ENCODE measurements at regions of chr9 and their contacts with region 1.

Region 1: GRCh38 chr9:19048966-19049916 is at the start of gene RRAGA:
- DNase-seq: peak; percentile 94
- H3K4me3 Mint-ChIP-seq: peak within 1 kb of the TSS; percentile 85
- H3K27ac Mint-ChIP-seq: peak within 1 kb of the TSS; percentile 90
- H3K4me1 Mint-ChIP-seq: peaks cover 25% of the 10 kb centered on the region
- H3K27me3 Mint-ChIP-seq: no peaks in the 10 kb centered on the region
- total RNA-seq, gene RRAGA: 21.6 to 22.3 TPM

Region 2: DNA sequence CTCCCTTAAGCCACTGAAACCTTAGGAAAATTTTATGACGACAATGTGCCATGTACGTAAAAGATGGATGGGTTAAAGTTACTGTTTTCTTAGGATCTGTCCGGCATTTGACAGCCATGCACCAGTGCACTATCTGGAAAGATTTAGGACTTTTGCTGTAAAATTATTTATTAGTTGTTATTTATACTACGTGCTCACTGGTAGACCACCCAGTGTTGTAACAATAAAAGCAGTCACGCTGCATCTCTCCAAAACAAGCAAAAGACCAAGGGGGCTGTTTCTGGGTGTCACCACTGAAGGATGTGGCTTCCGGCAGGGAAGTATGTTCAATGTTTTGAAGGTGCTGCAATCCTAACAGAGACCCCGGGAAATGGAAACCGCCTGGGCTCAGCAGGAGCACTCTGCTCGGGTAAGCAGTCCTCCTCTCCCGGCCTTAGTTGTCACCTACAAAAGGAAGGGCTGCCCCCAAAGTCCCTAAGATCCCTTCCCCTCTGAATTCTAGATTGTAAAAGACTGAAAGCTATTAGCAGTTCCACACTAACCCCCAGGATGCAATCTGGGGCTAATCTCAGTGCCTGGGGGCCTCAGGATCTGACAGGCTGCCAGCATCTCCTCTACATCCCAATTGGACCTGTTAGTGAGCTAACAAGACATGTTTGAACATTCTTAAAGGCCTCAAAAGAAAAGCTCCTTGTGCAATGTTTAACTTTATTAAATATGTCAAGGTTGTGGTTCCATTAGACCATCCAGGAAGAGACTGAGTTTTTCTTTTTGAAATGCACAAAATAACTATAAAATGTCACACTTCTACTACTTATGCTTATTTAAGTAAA is 54.8 kb before region 1 on chr9:
- CTCF ChIA-PET with region 1: no interaction called
- intact Hi-C with region 1: no loop called
- DNase-seq: no peak
- H3K4me3 Mint-ChIP-seq: no peak overlapping the region
- H3K27ac Mint-ChIP-seq: no peak overlapping the region
- H3K4me1 Mint-ChIP-seq: no peaks in the 10 kb centered on the region
- H3K27me3 Mint-ChIP-seq: no peaks in the 10 kb centered on the region

Region 3: GRCh38 chr9:19102631-19103345 is 53.5 kb after region 1 on chr9 and contains the start of gene HAUS6:
- CTCF ChIA-PET with region 1: no interaction called
- intact Hi-C with region 1: loop called (anchors 1 kb)
- DNase-seq: peak; percentile 97
- H3K4me3 Mint-ChIP-seq: peak within 1 kb of the TSS; percentile 94
- H3K27ac Mint-ChIP-seq: peak within 1 kb of the TSS; percentile 93
- H3K4me1 Mint-ChIP-seq: peaks cover 22% of the 10 kb centered on the region
- H3K27me3 Mint-ChIP-seq: no peaks in the 10 kb centered on the region
- total RNA-seq, gene HAUS6: 23.6 to 24.1 TPM

Region 4: DNA sequence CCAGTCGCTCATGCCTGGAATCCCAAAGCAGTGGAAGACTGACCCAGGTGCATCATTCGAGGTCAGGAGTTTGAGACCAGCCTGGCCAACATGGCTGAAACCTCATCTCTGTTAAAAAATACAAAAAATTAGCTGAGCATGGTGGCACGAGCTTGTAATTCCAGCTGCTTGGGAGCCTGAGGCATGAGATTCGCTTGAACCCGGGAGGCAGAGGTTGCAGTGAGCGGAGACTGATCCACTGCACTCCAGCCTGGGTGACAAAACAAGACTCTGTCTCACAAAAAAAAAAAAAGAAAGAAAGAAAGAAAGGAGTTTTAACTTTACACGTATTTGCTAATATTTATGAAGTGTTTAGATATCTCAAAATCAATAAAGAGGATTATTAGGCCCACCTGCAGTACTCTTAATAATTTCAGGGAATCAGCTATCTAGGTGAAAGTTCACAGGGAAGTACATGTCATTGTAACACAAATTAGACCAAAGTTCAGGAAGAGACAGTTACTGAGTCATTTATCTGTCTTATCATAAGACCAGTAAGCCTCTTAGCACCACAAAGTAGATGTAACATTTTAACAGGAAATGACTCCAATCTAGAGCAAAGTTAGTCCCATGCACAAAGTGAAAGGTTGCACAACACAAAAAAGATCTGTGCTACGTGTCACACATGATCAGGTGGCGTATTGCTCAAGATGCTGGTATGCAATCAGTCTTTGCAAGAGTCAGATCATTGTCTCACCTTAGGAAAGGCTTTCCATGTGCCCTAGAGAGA is 112.2 kb after region 1 on chr9:
- CTCF ChIA-PET with region 1: interaction called, 7 read pairs
- intact Hi-C with region 1: loop called (anchors 1 kb)
- DNase-seq: peak; percentile 87
- H3K4me3 Mint-ChIP-seq: no peak overlapping the region
- H3K27ac Mint-ChIP-seq: peak overlapping the region; percentile 81
- H3K4me1 Mint-ChIP-seq: peaks cover 23% of the 10 kb centered on the region
- H3K27me3 Mint-ChIP-seq: no peaks in the 10 kb centered on the region

Region 5: DNA sequence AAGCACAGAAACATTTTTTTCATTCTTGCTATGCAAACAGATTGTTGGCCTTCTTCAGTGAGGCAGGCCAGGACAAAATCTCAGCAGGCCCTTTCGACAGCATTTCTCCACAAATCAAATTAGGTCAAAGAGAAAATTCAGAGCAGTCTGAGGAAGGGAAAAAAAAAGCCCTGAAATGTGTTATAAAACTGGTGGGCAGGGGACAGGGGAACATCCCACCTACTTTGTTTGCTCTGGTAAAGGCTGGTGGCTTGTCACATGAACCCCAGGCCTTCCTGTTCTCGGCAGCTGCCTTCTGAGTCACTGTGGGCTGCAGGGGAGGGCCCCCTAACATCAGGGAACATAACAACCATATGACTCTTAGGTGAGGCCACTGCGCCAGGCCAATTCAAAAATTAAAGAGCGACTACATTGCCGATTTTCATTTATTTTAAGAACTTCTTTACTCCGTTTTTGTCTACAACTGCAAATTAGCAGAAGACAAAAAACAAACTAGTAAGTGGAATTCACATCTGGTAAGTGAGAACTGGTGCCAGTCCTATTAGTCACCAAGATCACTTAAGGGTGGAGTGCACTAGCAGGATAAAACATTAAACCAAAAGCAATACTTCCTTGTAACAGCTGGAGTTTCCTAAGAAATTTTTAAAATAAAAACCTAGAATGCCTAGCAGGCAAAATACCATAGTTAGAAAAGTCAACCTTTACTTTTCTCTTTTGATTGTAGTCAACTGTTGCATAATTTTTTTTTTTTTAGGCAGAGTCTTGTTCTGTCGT is 135.1 kb after region 1 on chr9:
- CTCF ChIA-PET with region 1: interaction called, 4 read pairs
- intact Hi-C with region 1: loop called (anchors 1 kb)
- DNase-seq: peak; percentile 92
- H3K4me3 Mint-ChIP-seq: peak overlapping the region; percentile 47
- H3K27ac Mint-ChIP-seq: peak overlapping the region; percentile 89
- H3K4me1 Mint-ChIP-seq: peaks cover 14% of the 10 kb centered on the region
- H3K27me3 Mint-ChIP-seq: no peaks in the 10 kb centered on the region

Region 6: GRCh38 chr9:19379697-19380046 is 330.4 kb after region 1 on chr9:
- CTCF ChIA-PET with region 1: interaction called, 3 read pairs
- intact Hi-C with region 1: loop called (anchors 1 kb)
- DNase-seq: no peak
- H3K4me3 Mint-ChIP-seq: peak overlapping the region; percentile 91
- H3K27ac Mint-ChIP-seq: peak overlapping the region; percentile 97
- H3K4me1 Mint-ChIP-seq: peaks cover 37% of the 10 kb centered on the region
- H3K27me3 Mint-ChIP-seq: no peaks in the 10 kb centered on the region

Region 7: GRCh38 chr9:19464764-19465585 is 415.7 kb after region 1 on chr9:
- CTCF ChIA-PET with region 1: interaction called, 12 read pairs
- intact Hi-C with region 1: no loop called
- DNase-seq: peak; percentile 69
- H3K4me3 Mint-ChIP-seq: peak overlapping the region; percentile 81
- H3K27ac Mint-ChIP-seq: no peak overlapping the region
- H3K4me1 Mint-ChIP-seq: peaks cover 9% of the 10 kb centered on the region
- H3K27me3 Mint-ChIP-seq: no peaks in the 10 kb centered on the region

Measured in activated naive CD4-positive, alpha-beta T cell treated with anti-CD3 and anti-CD28 coated beads for 36 hours (primary cell).